ENCODE measurements at regions of chr6 and their contacts with region 1.

Region 1: GRCh38 chr6:156087487-156087886 is 631.8 kb upstream of the NOX3 start:
- DNase-seq: no peak
- H3K4me3 ChIP-seq: no peak overlapping the region
- H3K27ac ChIP-seq: no peak overlapping the region
- H3K4me1 ChIP-seq: no peaks in the 10 kb centered on the region
- H3K27me3 ChIP-seq: no peaks in the 10 kb centered on the region
- CTCF ChIP-seq: no peak

Region 2: DNA sequence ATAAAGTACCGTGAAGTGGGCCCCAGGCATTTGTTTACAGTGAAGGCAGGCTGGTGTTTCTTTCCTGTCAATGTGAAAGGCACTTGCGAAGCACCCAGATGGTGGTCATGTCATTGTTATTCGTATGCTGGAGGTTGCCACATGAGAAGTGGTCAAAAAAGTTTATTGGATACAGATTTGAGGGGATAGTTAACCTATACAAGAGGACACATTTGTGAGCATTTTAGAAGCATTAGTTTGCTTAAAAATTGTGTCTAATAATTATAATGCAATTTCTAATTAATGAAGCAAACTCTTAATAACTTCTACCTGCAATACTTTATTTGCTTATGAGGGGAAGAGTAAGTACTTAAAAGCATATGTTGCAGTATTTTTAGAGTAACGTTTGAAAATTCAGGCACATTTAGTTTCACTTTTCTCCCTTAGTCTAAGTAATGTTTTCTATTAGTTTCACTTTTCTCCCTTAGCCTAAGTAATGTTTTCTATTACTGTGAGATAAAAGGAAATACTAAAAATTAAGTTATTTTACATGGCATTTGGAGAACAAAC is 944.4 kb before region 1 on chr6:
- CTCF ChIA-PET with region 1: no interaction called
- dilution Hi-C with region 1: no loop called
- in situ Hi-C with region 1: no loop called
- intact Hi-C with region 1: no loop called
- DNase-seq: no peak
- H3K4me3 ChIP-seq: peak overlapping the region in 2 of 3 experiments; percentile 9 to 21
- H3K27ac ChIP-seq: no peak overlapping the region
- H3K4me1 ChIP-seq: no peaks in the 10 kb centered on the region
- H3K27me3 ChIP-seq: no peaks in the 10 kb centered on the region
- CTCF ChIP-seq: no peak

Region 3: DNA sequence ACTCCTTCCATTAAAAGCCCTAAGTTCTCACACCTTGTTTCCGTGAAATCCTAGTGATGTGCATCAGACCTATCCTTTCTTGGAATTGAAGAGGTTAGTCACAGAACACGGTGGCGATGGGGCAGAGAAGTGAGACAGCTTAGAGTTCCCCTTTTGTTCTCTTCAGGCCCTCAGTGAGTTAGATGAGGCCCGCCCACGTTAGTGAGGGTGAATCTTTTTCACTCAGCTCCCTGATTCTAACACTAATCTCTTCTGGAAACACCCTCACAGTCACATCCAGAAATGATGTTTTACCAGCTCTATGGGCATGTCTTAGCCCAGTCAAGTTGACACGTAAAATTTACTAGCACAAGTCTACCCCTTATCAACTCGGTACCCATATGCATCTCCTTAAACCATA is 459.2 kb before region 1 on chr6:
- CTCF ChIA-PET with region 1: no interaction called
- dilution Hi-C with region 1: no loop called
- in situ Hi-C with region 1: no loop called
- intact Hi-C with region 1: no loop called
- DNase-seq: no peak
- H3K4me3 ChIP-seq: no peak overlapping the region
- H3K27ac ChIP-seq: no peak overlapping the region
- H3K4me1 ChIP-seq: no peaks in the 10 kb centered on the region
- H3K27me3 ChIP-seq: no peaks in the 10 kb centered on the region
- CTCF ChIP-seq: no peak

Region 4: DNA sequence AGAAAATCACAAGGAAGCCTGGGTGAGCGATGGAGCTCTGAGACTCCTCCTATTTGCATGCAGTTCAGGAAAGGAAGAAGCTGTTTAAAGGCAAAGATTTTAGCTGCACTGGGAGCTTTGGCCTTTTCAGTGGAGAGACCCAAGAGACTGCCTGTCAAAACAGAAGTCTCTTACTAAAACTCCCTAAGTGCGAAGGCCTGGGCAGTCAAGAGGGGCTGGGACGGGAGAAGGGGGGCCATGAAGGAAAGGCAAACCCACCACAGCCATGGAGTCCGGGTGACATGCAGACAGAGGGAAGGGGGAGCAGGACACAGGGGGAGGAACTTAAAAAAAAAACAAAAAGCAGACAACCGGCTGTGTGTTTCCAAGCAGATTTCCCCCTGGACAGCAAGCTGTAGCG is 94.2 kb before region 1 on chr6:
- CTCF ChIA-PET with region 1: no interaction called
- dilution Hi-C with region 1: no loop called
- in situ Hi-C with region 1: no loop called
- intact Hi-C with region 1: no loop called
- DNase-seq: no peak
- H3K4me3 ChIP-seq: no peak overlapping the region
- H3K27ac ChIP-seq: no peak overlapping the region
- H3K4me1 ChIP-seq: no peaks in the 10 kb centered on the region
- H3K27me3 ChIP-seq: no peaks in the 10 kb centered on the region
- CTCF ChIP-seq: no peak

Region 5: DNA sequence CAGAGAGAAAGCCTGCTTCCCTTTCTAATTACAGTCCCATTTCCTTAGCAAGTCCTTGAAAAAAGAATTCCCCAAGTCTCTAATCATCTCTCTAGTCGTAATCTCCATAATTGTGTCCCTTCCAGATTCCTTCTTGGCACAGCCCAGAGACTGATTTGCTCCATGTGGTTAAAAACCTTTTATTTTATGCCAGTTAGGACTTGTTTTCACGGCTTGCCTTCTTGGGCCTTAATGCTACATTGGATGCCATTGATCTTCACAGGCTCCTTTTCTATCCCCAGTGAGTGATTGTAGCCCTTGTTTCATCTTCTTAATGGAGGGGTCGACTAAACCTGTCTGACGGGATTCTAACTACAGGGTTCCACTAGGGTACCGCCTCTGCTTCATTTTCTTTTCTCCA is 39.0 kb after region 1 on chr6:
- CTCF ChIA-PET with region 1: no interaction called
- dilution Hi-C with region 1: loop called (anchors 5 kb)
- in situ Hi-C with region 1: no loop called
- intact Hi-C with region 1: no loop called
- DNase-seq: no peak
- H3K4me3 ChIP-seq: no peak overlapping the region
- H3K27ac ChIP-seq: no peak overlapping the region
- H3K4me1 ChIP-seq: no peaks in the 10 kb centered on the region
- H3K27me3 ChIP-seq: no peaks in the 10 kb centered on the region
- CTCF ChIP-seq: no peak

Measured in mammary epithelial cell (primary cell).